Naive thymus-derived CD4-positive, alpha-beta T cell (primary cell): ENCODE measurements at regions of chr1 and their contacts with region 1.

Region 1: DNA sequence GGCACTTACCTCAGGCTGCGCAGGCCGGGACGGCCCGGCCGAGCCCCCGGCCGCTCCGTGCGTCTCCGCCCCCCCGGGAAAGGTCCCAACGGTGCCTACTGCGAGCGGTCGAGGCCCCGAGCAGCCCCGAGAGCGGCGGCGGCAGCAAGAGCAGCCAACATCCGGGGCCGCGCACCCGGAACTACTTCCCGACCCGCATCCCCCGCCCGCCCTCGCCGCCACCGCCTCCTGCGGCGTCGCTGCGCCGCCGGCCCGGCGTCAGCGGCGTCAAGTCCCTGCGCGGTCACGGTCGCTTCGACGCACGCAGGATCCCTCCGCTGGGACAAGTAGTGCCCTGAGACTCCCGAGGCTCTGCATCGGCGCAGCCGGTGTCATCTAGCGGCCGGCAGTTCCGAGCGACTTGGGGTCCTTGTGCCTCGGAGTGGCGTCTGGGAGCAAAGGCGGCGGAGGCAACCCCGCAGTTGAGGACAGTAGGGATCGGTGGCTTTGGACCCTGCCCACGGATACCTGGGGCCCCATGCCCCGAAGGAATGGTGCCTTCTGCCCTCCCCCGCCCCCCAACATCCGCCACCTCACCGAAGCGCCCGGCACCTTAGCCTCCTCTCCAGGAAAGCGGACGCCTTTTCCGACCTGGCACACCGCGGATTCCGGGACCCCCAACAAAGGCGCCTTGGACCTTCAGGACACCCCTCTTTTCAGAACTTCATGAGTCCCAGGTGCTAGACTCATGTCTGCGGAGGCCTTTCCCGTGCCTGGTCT is at the start of gene FOXJ3:
- DNase-seq: peak; percentile 83 to 93 (median 91)
- ATAC-seq: peak; percentile 96
- H3K4me3 ChIP-seq: peak within 1 kb of the TSS; percentile 94
- H3K4me3 Mint-ChIP-seq: peak within 1 kb of the TSS; percentile 84 to 96 (median 94)
- H3K27ac ChIP-seq: peak within 1 kb of the TSS; percentile 90
- H3K27ac Mint-ChIP-seq: peak within 1 kb of the TSS; percentile 83 to 97 (median 92)
- H3K4me1 ChIP-seq: peaks cover 16 to 19% of the 10 kb centered on the region in 2 donors
- H3K4me1 Mint-ChIP-seq: peaks cover 42 to 65% (median 56%) of the 10 kb centered on the region in 7 donors
- H3K27me3 ChIP-seq: no peaks in the 10 kb centered on the region
- H3K27me3 Mint-ChIP-seq: peaks cover 0 to 3% (median 0%) of the 10 kb centered on the region in 5 donors
- total RNA-seq, gene FOXJ3: 59.5 to 93.3 (median 76.5) TPM

Region 2: GRCh38 chr1:41898191-41898713 is 437.0 kb before region 1 on chr1:
- CTCF ChIA-PET with region 1: no interaction called
- POLR2A ChIA-PET with region 1: no interaction called
- intact Hi-C with region 1: loop called in 1 of 2 experiments (anchors 1 kb)
- DNase-seq: peak; percentile 31 to 96 (median 89)
- ATAC-seq: peak; percentile 98
- H3K4me3 ChIP-seq: peak overlapping the region; percentile 40
- H3K4me3 Mint-ChIP-seq: peak overlapping the region; percentile 53 to 84 (median 74)
- H3K27ac ChIP-seq: peak overlapping the region; percentile 65
- H3K27ac Mint-ChIP-seq: peak overlapping the region; percentile 87 to 99 (median 95)
- H3K4me1 ChIP-seq: peaks cover 36 to 74% of the 10 kb centered on the region in 2 donors
- H3K4me1 Mint-ChIP-seq: peaks cover 46 to 90% (median 73%) of the 10 kb centered on the region in 7 donors
- H3K27me3 ChIP-seq: no peaks in the 10 kb centered on the region
- H3K27me3 Mint-ChIP-seq: no peaks in the 10 kb centered on the region

Region 3: GRCh38 chr1:42298520-42298919 is 36.7 kb before region 1 on chr1:
- CTCF ChIA-PET with region 1: no interaction called
- POLR2A ChIA-PET with region 1: interaction called, 3 read pairs
- intact Hi-C with region 1: loop called in 1 of 2 experiments (anchors 5 kb)
- DNase-seq: peak in 7 of 9 donors; percentile 10 to 74 (median 60)
- ATAC-seq: peak; percentile 83
- H3K4me3 ChIP-seq: no peak overlapping the region
- H3K4me3 Mint-ChIP-seq: peak overlapping the region; percentile 1 to 70 (median 64)
- H3K27ac ChIP-seq: peak overlapping the region; percentile 0
- H3K27ac Mint-ChIP-seq: peak overlapping the region in 8 of 9 donors; percentile 1 to 74 (median 20)
- H3K4me1 ChIP-seq: peaks cover 0 to 26% of the 10 kb centered on the region in 2 donors
- H3K4me1 Mint-ChIP-seq: peaks cover 9 to 74% (median 63%) of the 10 kb centered on the region in 7 donors
- H3K27me3 ChIP-seq: no peaks in the 10 kb centered on the region
- H3K27me3 Mint-ChIP-seq: no peaks in the 10 kb centered on the region

Region 4: GRCh38 chr1:42456010-42456758 is 121.0 kb after region 1 on chr1 and contains the starts of genes PPCS and ZMYND12:
- CTCF ChIA-PET with region 1: no interaction called
- POLR2A ChIA-PET with region 1: interaction called, 8 read pairs
- intact Hi-C with region 1: loop called (anchors 1 kb)
- DNase-seq: peak; percentile 84 to 94 (median 92)
- ATAC-seq: peak; percentile 95
- H3K4me3 ChIP-seq: peak within 1 kb of the TSS; percentile 100
- H3K4me3 Mint-ChIP-seq: peak within 1 kb of the TSS; percentile 85 to 99 (median 96)
- H3K27ac ChIP-seq: peak within 1 kb of the TSS; percentile 91
- H3K27ac Mint-ChIP-seq: peak within 1 kb of the TSS; percentile 95 to 100 (median 98)
- H3K4me1 ChIP-seq: peaks cover 17 to 23% of the 10 kb centered on the region in 2 donors
- H3K4me1 Mint-ChIP-seq: peaks cover 23 to 53% (median 40%) of the 10 kb centered on the region in 7 donors
- H3K27me3 ChIP-seq: no peaks in the 10 kb centered on the region
- H3K27me3 Mint-ChIP-seq: peaks cover 0 to under 1% (median 0%) of the 10 kb centered on the region in 5 donors
- total RNA-seq, gene PPCS: 45.4 to 78.4 (median 50.0) TPM
- total RNA-seq, gene ZMYND12: 0.44 to 1.2 (median 1.1) TPM

Region 5: GRCh38 chr1:42681741-42682483 is 346.7 kb after region 1 on chr1 and contains the start of gene YBX1:
- CTCF ChIA-PET with region 1: no interaction called
- POLR2A ChIA-PET with region 1: no interaction called
- intact Hi-C with region 1: loop called (anchors 1 kb)
- DNase-seq: peak; percentile 85 to 98 (median 97)
- ATAC-seq: peak; percentile 94
- H3K4me3 ChIP-seq: peak within 1 kb of the TSS; percentile 74
- H3K4me3 Mint-ChIP-seq: peak within 1 kb of the TSS; percentile 95 to 99 (median 98)
- H3K27ac ChIP-seq: peak within 1 kb of the TSS; percentile 82
- H3K27ac Mint-ChIP-seq: peak within 1 kb of the TSS; percentile 93 to 98 (median 97)
- H3K4me1 ChIP-seq: peaks cover 35 to 47% of the 10 kb centered on the region in 2 donors
- H3K4me1 Mint-ChIP-seq: peaks cover 42 to 66% (median 54%) of the 10 kb centered on the region in 7 donors
- H3K27me3 ChIP-seq: no peaks in the 10 kb centered on the region
- H3K27me3 Mint-ChIP-seq: no peaks in the 10 kb centered on the region
- total RNA-seq, gene YBX1: 277 to 471 (median 287) TPM

Region 6: GRCh38 chr1:42846257-42847110 is 511.3 kb after region 1 on chr1 and contains the start of gene ZNF691:
- CTCF ChIA-PET with region 1: no interaction called
- POLR2A ChIA-PET with region 1: no interaction called
- intact Hi-C with region 1: loop called in 1 of 2 experiments (anchors 2 kb)
- DNase-seq: peak; percentile 51 to 91 (median 84)
- ATAC-seq: peak; percentile 99
- H3K4me3 ChIP-seq: peak within 1 kb of the TSS; percentile 97
- H3K4me3 Mint-ChIP-seq: peak within 1 kb of the TSS; percentile 84 to 100 (median 96)
- H3K27ac ChIP-seq: peak within 1 kb of the TSS; percentile 72
- H3K27ac Mint-ChIP-seq: peak within 1 kb of the TSS; percentile 71 to 95 (median 85)
- H3K4me1 ChIP-seq: peaks cover 11 to 22% of the 10 kb centered on the region in 2 donors
- H3K4me1 Mint-ChIP-seq: peaks cover 19 to 38% (median 31%) of the 10 kb centered on the region in 7 donors
- H3K27me3 ChIP-seq: no peaks in the 10 kb centered on the region
- H3K27me3 Mint-ChIP-seq: no peaks in the 10 kb centered on the region
- total RNA-seq, gene ZNF691: 3.5 to 17.2 (median 12.8) TPM